Natural killer cell (primary cell): ENCODE measurements at regions of chr14 and their contacts with region 1.

Region 1: DNA sequence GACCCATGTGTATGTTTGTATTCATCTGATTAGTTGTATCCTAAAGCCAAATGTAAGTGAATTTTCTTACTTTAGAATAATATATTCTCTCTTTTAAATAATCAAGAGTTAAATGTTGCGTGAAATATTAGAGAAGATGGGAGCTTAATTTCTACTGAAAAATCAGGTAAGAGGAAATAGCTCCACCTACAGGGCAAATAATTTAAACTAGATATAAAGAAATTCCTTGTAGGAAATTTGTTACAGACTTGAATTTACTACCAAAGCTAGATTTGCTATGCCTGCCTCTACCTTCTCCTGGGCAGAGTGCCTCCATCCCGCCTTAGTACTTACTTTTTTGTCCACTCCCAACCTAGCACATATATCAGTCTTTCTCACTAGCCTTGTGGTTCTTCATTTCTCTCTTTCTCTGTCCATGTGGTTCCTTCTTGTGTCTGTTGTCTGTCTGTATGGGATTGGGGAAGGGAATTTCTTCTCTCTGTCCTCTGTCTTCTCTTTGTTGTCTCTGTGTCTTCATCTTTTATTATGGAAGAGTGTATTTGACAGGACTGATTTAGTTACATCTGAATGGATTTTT is 44.7 kb downstream of the PALS1 start:
- DNase-seq: peak in 1 of 2 donors; percentile 59
- ATAC-seq: no peak
- H3K4me3 ChIP-seq: no peak overlapping the region
- H3K4me3 Mint-ChIP-seq: no peak overlapping the region
- H3K27ac ChIP-seq: no peak overlapping the region
- H3K27ac Mint-ChIP-seq: no peak overlapping the region
- H3K4me1 ChIP-seq: no peaks in the 10 kb centered on the region
- H3K4me1 Mint-ChIP-seq: no peaks in the 10 kb centered on the region
- H3K27me3 ChIP-seq: no peaks in the 10 kb centered on the region
- H3K27me3 Mint-ChIP-seq: no peaks in the 10 kb centered on the region
- CTCF ChIP-seq: peak; percentile 68

Region 2: DNA sequence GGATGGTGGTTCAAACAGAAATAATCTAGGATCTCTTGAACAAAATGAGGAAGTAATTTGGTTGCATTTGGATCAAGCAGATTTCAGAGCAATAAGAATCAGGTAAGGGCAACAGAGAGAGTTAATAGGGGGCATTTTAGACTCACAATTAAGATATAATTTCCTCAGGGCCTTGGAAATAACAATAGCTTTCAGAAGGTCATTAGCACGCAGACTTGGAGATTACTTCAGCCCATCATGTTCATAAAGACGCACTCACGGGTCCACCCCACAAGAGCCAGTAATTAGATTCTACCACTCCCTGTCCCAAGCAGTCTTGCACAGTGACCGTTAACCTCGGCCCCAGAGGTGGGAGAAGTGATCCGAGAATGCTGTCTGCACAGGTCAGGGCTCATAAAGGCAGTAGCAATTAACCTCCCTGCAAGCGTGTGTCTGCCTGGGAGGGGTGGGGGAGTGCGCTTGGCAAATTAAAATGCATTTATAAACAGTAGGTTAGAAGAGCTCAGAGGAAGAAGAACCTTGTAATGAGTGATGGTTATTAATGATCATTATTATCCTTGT is 925.5 kb before region 1 on chr14:
- intact Hi-C with region 1: loop called (anchors 2 kb)
- DNase-seq: no peak
- ATAC-seq: no peak
- H3K4me3 ChIP-seq: no peak overlapping the region
- H3K4me3 Mint-ChIP-seq: no peak overlapping the region
- H3K27ac ChIP-seq: no peak overlapping the region
- H3K27ac Mint-ChIP-seq: no peak overlapping the region
- H3K4me1 ChIP-seq: no peaks in the 10 kb centered on the region
- H3K4me1 Mint-ChIP-seq: no peaks in the 10 kb centered on the region
- H3K27me3 ChIP-seq: no peaks in the 10 kb centered on the region
- H3K27me3 Mint-ChIP-seq: peaks cover 3 to 16% of the 10 kb centered on the region in 2 donors
- CTCF ChIP-seq: no peak

Region 3: DNA sequence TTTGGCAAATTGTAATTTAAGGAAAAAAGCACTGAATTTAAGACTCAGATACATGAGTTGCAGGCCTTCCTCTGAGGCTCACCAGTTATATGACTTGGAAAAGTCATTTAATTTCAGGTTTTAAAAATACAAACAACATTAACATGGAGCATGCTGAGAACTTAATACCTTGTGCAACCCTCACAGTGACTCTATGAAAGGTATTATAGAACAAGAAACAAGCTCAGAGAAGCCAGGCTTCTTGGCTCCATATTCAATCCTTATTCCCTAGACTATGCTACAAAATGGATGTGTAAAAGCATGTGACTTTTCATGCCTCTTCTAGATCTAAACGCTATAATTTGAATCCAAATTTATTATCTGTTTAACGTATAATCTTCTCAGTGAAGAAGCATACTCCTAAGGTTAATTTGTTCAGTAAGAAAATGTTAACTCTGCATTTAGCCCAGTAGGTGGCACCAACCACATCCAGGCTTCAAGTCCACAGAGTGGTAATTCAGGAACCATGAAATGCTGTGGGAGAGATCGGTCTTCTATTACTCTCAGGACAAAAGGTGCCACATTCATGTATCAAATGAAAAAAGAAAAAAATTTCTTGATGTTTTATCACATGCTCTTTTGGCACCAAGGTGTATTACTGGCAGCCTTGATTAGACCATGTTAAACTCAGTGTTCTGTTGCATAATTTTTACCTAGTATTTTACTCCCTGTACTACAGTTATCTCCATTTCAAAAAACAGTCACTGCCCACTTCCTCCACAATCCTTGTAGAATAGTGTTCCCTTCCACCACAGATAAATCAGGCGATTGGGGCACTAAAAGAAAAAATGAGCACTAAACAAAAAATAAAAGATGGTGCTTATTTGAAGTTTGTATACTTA is 790.5 kb before region 1 on chr14:
- intact Hi-C with region 1: loop called (anchors 5 kb)
- DNase-seq: peak in 1 of 2 donors; percentile 75
- ATAC-seq: peak in 2 of 3 donors; percentile 64 to 76
- H3K4me3 ChIP-seq: no peak overlapping the region
- H3K4me3 Mint-ChIP-seq: no peak overlapping the region
- H3K27ac ChIP-seq: no peak overlapping the region
- H3K27ac Mint-ChIP-seq: no peak overlapping the region
- H3K4me1 ChIP-seq: no peaks in the 10 kb centered on the region
- H3K4me1 Mint-ChIP-seq: no peaks in the 10 kb centered on the region
- H3K27me3 ChIP-seq: no peaks in the 10 kb centered on the region
- H3K27me3 Mint-ChIP-seq: peaks cover 7 to 8% of the 10 kb centered on the region in 2 donors
- CTCF ChIP-seq: peak; percentile 64

Region 4: GRCh38 chr14:66624299-66624937 is 661.5 kb before region 1 on chr14:
- intact Hi-C with region 1: loop called (anchors 10 kb)
- DNase-seq: peak in 1 of 2 donors; percentile 44
- ATAC-seq: peak in 2 of 3 donors; percentile 39 to 44
- H3K4me3 ChIP-seq: no peak overlapping the region
- H3K4me3 Mint-ChIP-seq: no peak overlapping the region
- H3K27ac ChIP-seq: no peak overlapping the region
- H3K27ac Mint-ChIP-seq: no peak overlapping the region
- H3K4me1 ChIP-seq: no peaks in the 10 kb centered on the region
- H3K4me1 Mint-ChIP-seq: peaks cover 0 to 9% of the 10 kb centered on the region in 2 donors
- H3K27me3 ChIP-seq: no peaks in the 10 kb centered on the region
- H3K27me3 Mint-ChIP-seq: no peaks in the 10 kb centered on the region
- CTCF ChIP-seq: no peak

Region 5: DNA sequence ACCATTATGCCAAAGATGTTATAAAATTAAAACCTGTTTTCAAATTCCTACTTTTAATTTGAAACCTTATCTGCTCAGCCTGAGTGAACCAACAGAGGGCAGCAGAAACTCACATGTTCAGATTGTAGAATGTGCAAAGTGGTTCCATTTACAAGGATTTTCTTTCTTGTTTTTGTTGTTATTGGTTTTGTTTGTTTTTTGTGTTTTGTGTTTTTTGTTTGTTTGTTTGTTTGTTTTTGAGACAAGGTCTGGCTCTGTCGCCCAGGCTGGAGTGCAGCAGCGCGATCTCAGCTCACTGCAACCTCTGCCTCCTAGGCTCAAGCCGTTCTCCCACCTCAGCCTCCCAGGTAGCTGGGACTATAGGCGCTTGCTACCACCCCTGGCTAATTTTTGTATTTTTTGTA is 119.5 kb before region 1 on chr14:
- intact Hi-C with region 1: loop called (anchors 1 kb)
- DNase-seq: peak in 1 of 2 donors; percentile 66
- ATAC-seq: no peak
- H3K4me3 ChIP-seq: no peak overlapping the region
- H3K4me3 Mint-ChIP-seq: no peak overlapping the region
- H3K27ac ChIP-seq: no peak overlapping the region
- H3K27ac Mint-ChIP-seq: no peak overlapping the region
- H3K4me1 ChIP-seq: no peaks in the 10 kb centered on the region
- H3K4me1 Mint-ChIP-seq: no peaks in the 10 kb centered on the region
- H3K27me3 ChIP-seq: no peaks in the 10 kb centered on the region
- H3K27me3 Mint-ChIP-seq: no peaks in the 10 kb centered on the region
- CTCF ChIP-seq: peak; percentile 61

Region 6: GRCh38 chr14:67551940-67552339 is 266.0 kb after region 1 on chr14:
- intact Hi-C with region 1: no loop called
- DNase-seq: no peak
- ATAC-seq: no peak
- H3K4me3 ChIP-seq: no peak overlapping the region
- H3K4me3 Mint-ChIP-seq: no peak overlapping the region
- H3K27ac ChIP-seq: no peak overlapping the region
- H3K27ac Mint-ChIP-seq: no peak overlapping the region
- H3K4me1 ChIP-seq: no peaks in the 10 kb centered on the region
- H3K4me1 Mint-ChIP-seq: no peaks in the 10 kb centered on the region
- H3K27me3 ChIP-seq: no peaks in the 10 kb centered on the region
- H3K27me3 Mint-ChIP-seq: peaks cover 8 to 10% of the 10 kb centered on the region in 2 donors
- CTCF ChIP-seq: no peak